ENCODE measurements at regions of chr7 and their contacts with region 1.

Region 1: DNA sequence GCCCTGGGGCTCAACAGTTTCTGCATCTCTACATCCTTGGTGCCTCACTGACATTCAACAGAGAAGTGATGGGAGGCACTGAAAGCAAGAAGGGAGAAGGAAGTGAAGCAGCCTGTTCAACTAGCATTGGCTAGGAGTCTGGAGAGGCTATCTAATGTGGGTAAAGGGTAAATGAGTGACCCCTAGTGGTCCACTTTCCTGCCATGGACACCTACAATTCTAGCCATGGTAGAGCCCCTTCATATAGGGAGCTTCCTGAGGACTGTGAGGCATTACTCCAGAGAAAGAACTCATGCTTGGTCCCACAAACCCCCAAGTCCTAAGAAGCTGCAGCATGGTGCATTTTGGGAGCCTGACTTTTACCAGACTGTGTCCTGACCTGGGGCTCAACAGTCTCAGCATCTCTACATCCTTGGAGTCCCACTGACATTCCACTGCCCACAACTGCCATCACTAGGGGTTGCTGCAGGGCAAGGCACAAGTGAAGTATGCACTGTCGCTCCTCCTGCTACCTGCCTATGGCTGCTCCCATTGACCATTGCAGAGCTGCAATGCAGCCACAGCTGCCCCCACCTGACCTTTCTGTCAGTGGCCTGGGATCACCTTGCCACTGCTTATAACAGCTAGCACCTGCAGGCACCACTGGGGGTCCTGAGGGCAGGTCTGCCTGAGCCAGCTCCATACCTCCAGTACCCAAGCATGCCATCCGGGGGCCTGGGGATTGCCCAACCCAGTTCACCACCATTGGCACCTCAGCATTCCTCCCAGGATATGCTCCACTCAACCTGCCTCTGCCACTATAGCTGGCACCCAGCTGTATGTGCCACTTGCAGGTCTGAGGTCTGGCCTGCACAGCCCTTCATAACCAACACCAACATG is 44.1 kb upstream of the CDK6 start:
- DNase-seq: peak; percentile 66
- H3K4me3 ChIP-seq: no peak overlapping the region
- H3K4me3 Mint-ChIP-seq: no peak overlapping the region
- H3K27ac Mint-ChIP-seq: no peak overlapping the region
- H3K4me1 ChIP-seq: no peaks in the 10 kb centered on the region
- H3K4me1 Mint-ChIP-seq: peaks cover 6% of the 10 kb centered on the region
- H3K27me3 ChIP-seq: no peaks in the 10 kb centered on the region
- H3K27me3 Mint-ChIP-seq: peaks cover 7% of the 10 kb centered on the region
- CTCF ChIP-seq: peak; percentile 44 to 54

Region 2: GRCh38 chr7:92797693-92798092 is 82.8 kb before region 1 on chr7:
- CTCF ChIA-PET with region 1: no interaction called
- POLR2A ChIA-PET with region 1: no interaction called
- intact Hi-C with region 1: no loop called
- DNase-seq: no peak
- H3K4me3 ChIP-seq: no peak overlapping the region
- H3K4me3 Mint-ChIP-seq: no peak overlapping the region
- H3K27ac Mint-ChIP-seq: no peak overlapping the region
- H3K4me1 ChIP-seq: peaks cover 6% of the 10 kb centered on the region; the same call in 1 of the 2 replicates
- H3K4me1 Mint-ChIP-seq: peaks cover 11% of the 10 kb centered on the region
- H3K27me3 ChIP-seq: no peaks in the 10 kb centered on the region
- H3K27me3 Mint-ChIP-seq: no peaks in the 10 kb centered on the region
- CTCF ChIP-seq: no peak

Region 3: DNA sequence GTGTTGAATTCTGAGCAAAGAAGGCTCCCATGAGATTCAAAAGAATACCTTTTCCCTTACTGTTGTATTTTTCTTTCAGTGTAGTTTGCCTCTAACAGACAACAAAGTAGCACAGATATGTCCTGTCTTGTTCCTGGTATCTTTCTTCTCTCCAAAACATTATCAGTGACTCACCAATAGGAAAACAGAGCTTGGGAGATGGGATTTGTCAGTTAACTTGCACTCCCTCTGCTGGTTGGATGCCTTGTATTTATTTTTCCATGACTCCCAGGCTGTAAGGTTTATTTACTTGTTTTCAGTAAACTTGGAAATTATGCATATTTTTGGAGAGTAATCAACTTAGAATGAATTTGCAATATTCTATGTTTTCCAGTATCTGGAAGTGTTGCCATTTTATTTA is 107.6 kb after region 1 on chr7:
- CTCF ChIA-PET with region 1: interaction called, 17 read pairs
- POLR2A ChIA-PET with region 1: no interaction called
- intact Hi-C with region 1: no loop called
- DNase-seq: peak in 1 of 2 experiments; percentile 55
- H3K4me3 ChIP-seq: no peak overlapping the region
- H3K4me3 Mint-ChIP-seq: no peak overlapping the region
- H3K27ac Mint-ChIP-seq: peak overlapping the region; percentile 32
- H3K4me1 ChIP-seq: 0 out of 2 replicates have a peak, but pooled peaks cover 10% of the 10 kb centered on the region
- H3K4me1 Mint-ChIP-seq: peaks cover 11% of the 10 kb centered on the region
- H3K27me3 ChIP-seq: no peaks in the 10 kb centered on the region
- H3K27me3 Mint-ChIP-seq: peaks cover 3% of the 10 kb centered on the region
- CTCF ChIP-seq: peak; percentile 39 to 53

Region 4: GRCh38 chr7:93055543-93056107 is 175.2 kb after region 1 on chr7:
- CTCF ChIA-PET with region 1: interaction called, 4 read pairs
- POLR2A ChIA-PET with region 1: no interaction called
- intact Hi-C with region 1: loop called (anchors 1 kb)
- DNase-seq: peak in 1 of 2 experiments; percentile 21
- H3K4me3 ChIP-seq: no peak overlapping the region
- H3K4me3 Mint-ChIP-seq: no peak overlapping the region
- H3K27ac Mint-ChIP-seq: no peak overlapping the region
- H3K4me1 ChIP-seq: no peaks in the 10 kb centered on the region
- H3K4me1 Mint-ChIP-seq: no peaks in the 10 kb centered on the region
- H3K27me3 ChIP-seq: no peaks in the 10 kb centered on the region
- H3K27me3 Mint-ChIP-seq: no peaks in the 10 kb centered on the region
- CTCF ChIP-seq: peak; percentile 50 to 76